Activated CD4-positive, alpha-beta T cell treated with anti-CD3 and anti-CD28 coated beads, Interleukin-2, amount 10 ng/mL, durations not matched to agents 24 days and 14 days (primary cell): ENCODE measurements at regions of chr1 and their contacts with region 1.

Region 1: GRCh38 chr1:205631727-205632373 is at the start of gene ELK4:
- DNase-seq: peak; percentile 100
- H3K4me3 Mint-ChIP-seq: peak within 1 kb of the TSS; percentile 96
- H3K27ac Mint-ChIP-seq: peak within 1 kb of the TSS; percentile 97
- H3K4me1 Mint-ChIP-seq: peaks cover 35% of the 10 kb centered on the region
- H3K27me3 Mint-ChIP-seq: peaks cover 7% of the 10 kb centered on the region
- total RNA-seq, gene ELK4: 81.8 and 83.1 TPM in 2 replicates

Region 2: DNA sequence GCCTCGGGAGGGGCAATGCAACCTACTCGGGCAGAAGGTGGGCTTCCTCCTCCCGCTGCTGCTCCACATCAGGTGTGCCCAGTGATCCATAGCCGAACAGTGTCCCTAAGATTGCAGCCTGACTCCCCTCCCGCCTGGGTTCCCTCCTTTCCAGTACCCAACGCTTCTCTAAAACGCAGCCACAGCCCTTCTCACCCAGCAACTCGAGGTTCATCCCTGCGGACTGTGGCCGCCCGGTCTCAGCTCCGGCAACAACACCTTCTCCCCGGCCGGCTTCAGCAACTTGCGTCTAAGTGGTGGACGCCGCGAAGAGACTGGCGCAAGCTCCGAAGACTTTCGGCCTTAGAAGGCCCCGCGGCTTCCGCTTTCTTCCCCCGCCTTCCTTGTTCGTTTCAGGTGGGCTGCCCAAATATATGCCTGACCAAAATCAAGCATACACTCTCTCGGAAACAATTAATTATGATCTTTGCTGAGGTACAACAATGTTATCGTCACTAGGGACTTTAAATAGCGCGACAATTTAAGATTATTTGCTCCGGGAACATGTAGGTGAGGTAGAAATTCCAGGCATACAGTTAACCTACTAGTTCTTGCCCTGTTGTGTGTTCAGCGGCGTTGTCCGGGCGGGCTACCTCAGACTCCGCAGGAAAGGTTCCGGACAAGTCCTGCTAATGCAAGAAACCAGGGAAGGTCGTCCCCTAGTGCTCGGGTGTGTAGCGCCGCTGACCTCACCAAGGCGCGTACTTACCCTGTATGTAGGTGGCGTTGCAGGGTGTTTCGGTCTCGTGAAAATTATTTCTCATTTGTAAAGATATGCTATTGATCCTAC is 510.0 kb before region 1 on chr1 and contains the start of gene RBBP5:
- intact Hi-C with region 1: loop called (anchors 1 kb)
- DNase-seq: peak; percentile 98
- H3K4me3 Mint-ChIP-seq: peak within 1 kb of the TSS; percentile 98
- H3K27ac Mint-ChIP-seq: peak within 1 kb of the TSS; percentile 98
- H3K4me1 Mint-ChIP-seq: peaks cover 34% of the 10 kb centered on the region
- H3K27me3 Mint-ChIP-seq: no peaks in the 10 kb centered on the region
- total RNA-seq, gene RBBP5: 24.0 and 27.2 TPM in 2 replicates

Region 3: DNA sequence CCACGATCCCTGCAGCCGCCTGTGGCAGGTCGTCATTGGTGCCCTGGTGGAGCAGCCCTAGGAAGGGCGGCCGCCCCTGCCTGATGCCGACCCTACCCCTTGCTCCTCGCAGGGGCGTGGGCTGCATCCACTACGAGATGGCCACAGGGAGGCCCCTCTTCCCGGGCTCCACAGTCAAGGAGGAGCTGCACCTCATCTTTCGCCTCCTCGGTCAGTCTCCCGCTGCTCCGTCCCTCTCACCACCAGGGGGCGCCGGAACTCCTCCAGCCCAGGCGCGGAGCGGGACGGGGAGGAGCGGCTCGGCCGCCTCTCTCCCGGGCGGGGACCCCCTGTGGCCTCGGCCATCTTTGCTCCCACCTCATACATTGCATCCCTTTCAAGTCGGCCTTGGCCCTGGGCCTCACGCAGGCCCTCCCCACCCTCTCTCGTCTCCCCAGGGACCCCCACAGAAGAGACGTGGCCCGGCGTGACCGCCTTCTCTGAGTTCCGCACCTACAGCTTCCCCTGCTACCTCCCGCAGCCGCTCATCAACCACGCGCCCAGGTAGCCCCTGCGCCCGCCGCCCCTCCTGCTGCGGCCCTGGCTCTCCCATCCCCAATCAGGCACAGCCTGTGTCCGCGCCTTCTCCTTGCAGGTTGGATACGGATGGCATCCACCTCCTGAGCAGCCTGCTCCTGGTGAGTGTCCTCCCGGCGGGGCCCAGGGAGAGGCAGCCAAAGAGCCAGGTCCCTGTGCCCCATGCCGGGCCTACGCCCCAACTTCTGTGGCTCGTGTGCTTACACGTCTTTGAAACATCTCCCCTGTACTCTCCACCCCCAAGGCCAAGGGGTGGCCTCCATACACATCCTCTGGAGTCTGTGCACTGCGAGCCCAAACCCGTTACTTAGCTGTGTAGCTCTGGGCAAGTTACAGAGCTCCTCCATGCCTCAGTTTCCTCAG is 102.7 kb before region 1 on chr1:
- intact Hi-C with region 1: loop called (anchors 1 kb)
- DNase-seq: peak; percentile 95
- H3K4me3 Mint-ChIP-seq: peak overlapping the region; percentile 48
- H3K27ac Mint-ChIP-seq: peak overlapping the region; percentile 34
- H3K4me1 Mint-ChIP-seq: peaks cover 3% of the 10 kb centered on the region
- H3K27me3 Mint-ChIP-seq: peaks cover 6% of the 10 kb centered on the region

Region 4: DNA sequence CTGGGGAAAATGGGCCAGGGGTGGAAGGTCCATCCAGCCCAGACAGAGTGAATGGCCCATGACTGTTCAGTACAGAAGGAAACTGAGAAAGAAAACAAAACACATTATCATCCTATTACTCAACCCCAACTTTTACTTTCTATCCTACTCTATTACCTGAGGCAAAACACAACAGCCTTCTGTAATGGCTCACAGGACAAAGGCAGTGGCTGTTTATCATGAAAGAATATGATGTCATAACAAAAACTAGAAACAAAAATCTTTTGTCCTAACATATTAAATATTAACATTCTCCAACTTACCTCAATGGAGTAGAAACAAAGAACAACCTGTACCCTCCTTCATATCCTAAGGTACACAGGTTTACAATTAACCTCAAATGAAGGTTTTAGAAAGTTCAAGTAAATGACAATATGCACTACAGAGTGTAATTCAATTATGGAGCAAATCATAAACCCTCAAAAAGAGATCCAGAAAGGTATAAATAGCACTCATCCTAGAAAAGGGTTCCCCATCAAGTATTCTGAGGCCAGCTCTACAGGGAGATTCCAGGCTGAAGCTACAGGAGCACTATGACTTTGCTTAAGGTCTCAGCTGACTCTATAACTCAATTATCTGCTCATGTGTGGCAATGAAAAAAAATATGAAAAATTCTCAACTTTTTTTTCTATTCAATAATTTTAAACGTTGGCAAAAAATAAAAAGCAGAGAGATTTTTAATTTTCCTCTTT is 15.1 kb before region 1 on chr1:
- intact Hi-C with region 1: loop called (anchors 1 kb)
- DNase-seq: no peak
- H3K4me3 Mint-ChIP-seq: no peak overlapping the region
- H3K27ac Mint-ChIP-seq: peak overlapping the region; percentile 41
- H3K4me1 Mint-ChIP-seq: peaks cover 24% of the 10 kb centered on the region
- H3K27me3 Mint-ChIP-seq: no peaks in the 10 kb centered on the region

Region 5: GRCh38 chr1:205668951-205669340 is 37.1 kb after region 1 on chr1:
- intact Hi-C with region 1: no loop called
- DNase-seq: no peak
- H3K4me3 Mint-ChIP-seq: no peak overlapping the region
- H3K27ac Mint-ChIP-seq: no peak overlapping the region
- H3K4me1 Mint-ChIP-seq: peaks cover 2% of the 10 kb centered on the region
- H3K27me3 Mint-ChIP-seq: peaks cover 5% of the 10 kb centered on the region

Region 6: DNA sequence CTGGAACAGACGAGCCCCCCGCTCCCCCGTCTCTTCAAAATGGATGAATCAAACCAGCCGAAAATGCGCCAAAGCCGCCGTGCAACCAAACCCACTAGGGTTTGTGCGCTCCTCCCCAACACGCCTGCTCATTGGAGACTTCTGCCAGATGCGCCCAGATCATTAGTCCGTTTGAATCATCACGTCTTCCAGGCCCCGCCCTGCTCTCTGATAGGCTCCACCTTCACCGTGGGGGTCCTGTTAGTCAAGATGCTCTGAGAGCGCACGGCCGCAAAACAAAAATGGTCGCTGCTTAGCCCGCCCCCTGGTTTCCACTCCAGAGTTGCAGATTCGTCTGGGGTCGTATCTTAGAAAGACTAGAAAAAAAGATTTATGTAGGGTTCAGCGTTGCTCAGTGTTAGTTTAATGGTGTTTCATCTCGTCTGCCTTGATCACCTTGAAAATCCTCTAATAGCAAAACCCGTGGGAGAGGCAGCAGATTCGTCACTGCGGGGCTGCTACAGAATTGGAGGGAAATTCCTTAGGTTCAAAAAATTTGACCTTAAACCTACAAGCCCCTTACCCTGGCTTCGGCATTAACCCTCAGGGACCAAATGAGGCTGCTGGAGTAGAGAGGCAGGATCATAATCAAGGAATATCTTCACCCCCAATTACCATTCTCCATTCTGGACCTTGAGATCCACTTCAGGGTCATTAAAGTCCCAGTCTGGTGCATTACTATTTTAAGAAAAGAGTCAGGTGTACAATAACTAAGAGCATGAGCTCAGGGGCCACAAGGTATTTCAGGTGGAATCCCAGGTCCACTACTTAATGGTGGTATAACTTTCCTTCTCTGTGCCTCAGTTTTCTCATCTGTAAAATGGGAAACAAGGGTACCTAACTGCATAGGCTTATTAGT is 118.5 kb after region 1 on chr1 and contains the start of gene NUCKS1:
- intact Hi-C with region 1: loop called (anchors 1 kb)
- DNase-seq: peak; percentile 99
- H3K4me3 Mint-ChIP-seq: peak within 1 kb of the TSS; percentile 85
- H3K27ac Mint-ChIP-seq: peak within 1 kb of the TSS; percentile 96
- H3K4me1 Mint-ChIP-seq: peaks cover 27% of the 10 kb centered on the region
- H3K27me3 Mint-ChIP-seq: peaks cover 4% of the 10 kb centered on the region
- total RNA-seq, gene NUCKS1: 161 and 188 TPM in 2 replicates